ENCODE measurements at regions of chr2 and their contacts with region 1.

Region 1: DNA sequence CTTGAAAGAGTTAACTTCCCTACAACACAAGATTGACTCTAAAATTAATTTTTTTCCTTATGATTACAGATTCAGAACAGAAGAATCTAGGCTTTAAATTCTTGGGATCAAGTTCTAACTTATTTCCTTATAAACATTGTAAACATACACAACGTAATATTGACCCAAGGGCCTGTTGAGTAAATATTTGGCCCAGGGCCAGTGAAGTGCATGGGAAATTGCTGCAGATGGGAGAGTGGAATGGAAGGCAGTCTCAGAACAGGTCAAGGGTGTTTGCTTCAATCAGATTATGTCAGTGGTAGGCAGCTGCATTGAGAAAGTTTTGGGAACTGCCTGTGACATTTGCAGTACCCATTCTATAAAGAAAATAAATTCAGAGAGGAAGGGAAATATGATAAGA is 137.6 kb downstream of the MYO1B start:
- DNase-seq: peak in 3 of 5 donors; percentile 31 to 47 (median 36)
- ATAC-seq: peak in 1 of 4 donors; percentile 59
- H3K4me3 ChIP-seq: no peak overlapping the region
- H3K27ac ChIP-seq: peak overlapping the region in 2 of 12 donors; percentile 42 to 65
- H3K4me1 ChIP-seq: peaks cover 0 to 30% (median 10%) of the 10 kb centered on the region in 12 donors
- H3K27me3 ChIP-seq: no peaks in the 10 kb centered on the region
- CTCF ChIP-seq: no peak
- POLR2A ChIP-seq: no peak

Region 2: DNA sequence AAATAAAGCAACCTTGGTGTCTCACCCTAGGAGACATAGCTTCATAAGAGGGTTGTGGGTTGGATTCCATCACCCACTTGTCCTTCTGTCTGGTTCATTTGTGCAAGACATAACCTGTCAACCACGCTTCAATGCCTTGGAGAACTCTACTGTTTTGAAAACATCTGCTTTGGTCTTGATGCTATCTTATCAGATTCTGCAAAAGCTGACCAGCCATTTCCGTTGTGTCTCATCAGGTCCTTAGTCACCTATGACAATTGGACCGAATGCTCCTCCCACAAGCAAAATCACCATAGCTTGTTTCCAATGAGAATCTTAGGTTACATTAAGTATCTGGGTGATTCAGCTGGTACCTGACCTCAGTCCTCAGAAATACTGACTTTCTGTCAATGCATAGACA is 267.4 kb before region 1 on chr2:
- intact Hi-C with region 1: no loop called
- DNase-seq: no peak
- ATAC-seq: no peak
- H3K4me3 ChIP-seq: no peak overlapping the region
- H3K27ac ChIP-seq: peak overlapping the region in 1 of 12 donors; percentile 50
- H3K4me1 ChIP-seq: peaks cover 0 to 19% (median 0%) of the 10 kb centered on the region in 12 donors
- H3K27me3 ChIP-seq: no peaks in the 10 kb centered on the region
- CTCF ChIP-seq: no peak
- POLR2A ChIP-seq: no peak

Region 3: GRCh38 chr2:191333911-191334357 is 48.9 kb before region 1 on chr2:
- intact Hi-C with region 1: no loop called
- DNase-seq: no peak
- ATAC-seq: peak; percentile 44 to 83 (median 64)
- H3K4me3 ChIP-seq: no peak overlapping the region
- H3K27ac ChIP-seq: peak overlapping the region in 6 of 12 donors; percentile 18 to 55 (median 32)
- H3K4me1 ChIP-seq: peaks cover 0 to 41% (median 5%) of the 10 kb centered on the region in 12 donors
- H3K27me3 ChIP-seq: no peaks in the 10 kb centered on the region
- CTCF ChIP-seq: no peak
- POLR2A ChIP-seq: no peak

Region 4: DNA sequence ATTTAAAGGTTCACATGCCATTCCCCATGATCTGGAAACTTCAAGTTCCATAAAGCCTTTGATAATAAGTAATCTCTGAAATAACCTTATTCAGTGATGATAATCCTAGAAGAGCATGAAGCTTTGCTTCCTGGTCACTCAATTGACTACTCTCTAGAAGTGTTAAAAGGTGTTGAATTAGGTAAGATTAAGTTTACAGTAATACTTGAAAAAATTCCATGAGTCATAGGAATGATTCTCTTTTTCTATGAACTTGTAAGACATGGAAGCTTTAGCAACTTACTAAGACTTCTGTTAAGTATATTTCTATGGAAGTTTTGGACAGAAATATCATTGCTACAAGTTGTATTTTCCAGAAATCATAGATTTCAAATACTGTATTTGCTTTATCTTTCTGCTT is 37.0 kb before region 1 on chr2:
- intact Hi-C with region 1: loop called in 1 of 10 experiments (anchors 5 kb)
- DNase-seq: no peak
- ATAC-seq: no peak
- H3K4me3 ChIP-seq: no peak overlapping the region
- H3K27ac ChIP-seq: no peak overlapping the region
- H3K4me1 ChIP-seq: peaks cover 0 to 23% (median 2%) of the 10 kb centered on the region in 12 donors
- H3K27me3 ChIP-seq: no peaks in the 10 kb centered on the region
- CTCF ChIP-seq: no peak
- POLR2A ChIP-seq: no peak

Measured in heart left ventricle (tissue), 16 donors.